ENCODE measurements at regions of chr16 and their contacts with region 1.

Region 1: DNA sequence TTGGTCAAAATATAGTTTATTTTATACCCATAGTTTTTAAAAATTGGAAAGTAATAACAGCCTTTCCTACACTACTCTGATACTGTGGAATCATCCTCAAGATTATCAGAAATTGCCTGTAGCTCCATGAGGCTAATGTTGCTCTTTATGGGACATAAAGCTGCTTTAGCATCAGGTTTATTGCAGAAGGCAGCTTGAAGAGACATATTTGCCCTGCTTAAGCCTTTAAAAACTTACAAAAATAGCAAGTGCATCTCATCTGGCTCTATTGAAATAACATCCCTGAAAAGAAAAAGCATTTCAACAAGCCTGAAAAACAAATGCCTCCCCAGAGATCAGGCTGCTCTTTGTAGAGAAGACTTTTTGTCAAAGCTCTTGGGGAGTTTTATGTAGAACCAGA is 142.9 kb upstream of the MON1B start:
- DNase-seq: no peak

Region 2: GRCh38 chr16:75296606-75297005 is 1751.5 kb before region 1 on chr16:
- intact Hi-C with region 1: no loop called
- DNase-seq: no peak

Region 3: GRCh38 chr16:76976101-76976500 is 72.0 kb before region 1 on chr16:
- intact Hi-C with region 1: no loop called
- DNase-seq: no peak

Region 4: GRCh38 chr16:77009453-77009852 is 38.6 kb before region 1 on chr16:
- intact Hi-C with region 1: loop called in 1 of 2 experiments (anchors 2 kb)
- DNase-seq: no peak

Measured in posterior vena cava (tissue), 2 donors.